GM10248 (cell line): ENCODE measurements at regions of chr17 and their contacts with region 1.

Region 1: GRCh38 chr17:29589524-29590410 is at the start of gene GIT1:
- DNase-seq: peak; percentile 95
- CTCF ChIP-seq: no peak

Region 2: GRCh38 chr17:29568331-29569244 is 21.2 kb before region 1 on chr17 and contains the start of gene TP53I13:
- CTCF ChIA-PET with region 1: interaction called, 144 read pairs
- POLR2A ChIA-PET with region 1: no interaction called
- DNase-seq: peak; percentile 89
- CTCF ChIP-seq: no peak

Region 3: GRCh38 chr17:29608891-29609361 is 19.2 kb after region 1 on chr17:
- CTCF ChIA-PET with region 1: interaction called, 48 read pairs
- POLR2A ChIA-PET with region 1: no interaction called
- DNase-seq: no peak
- CTCF ChIP-seq: no peak